ENCODE measurements at regions of chr6 and their contacts with region 1.

Region 1: GRCh38 chr6:153312641-153313040 is 181.6 kb upstream of the RGS17 start:
- DNase-seq: no peak
- H3K4me3 ChIP-seq: no peak overlapping the region
- H3K27ac ChIP-seq: no peak overlapping the region
- H3K4me1 ChIP-seq: no peaks in the 10 kb centered on the region
- H3K27me3 ChIP-seq: no peaks in the 10 kb centered on the region
- CTCF ChIP-seq: no peak
- POLR2A ChIP-seq: no peak

Region 2: DNA sequence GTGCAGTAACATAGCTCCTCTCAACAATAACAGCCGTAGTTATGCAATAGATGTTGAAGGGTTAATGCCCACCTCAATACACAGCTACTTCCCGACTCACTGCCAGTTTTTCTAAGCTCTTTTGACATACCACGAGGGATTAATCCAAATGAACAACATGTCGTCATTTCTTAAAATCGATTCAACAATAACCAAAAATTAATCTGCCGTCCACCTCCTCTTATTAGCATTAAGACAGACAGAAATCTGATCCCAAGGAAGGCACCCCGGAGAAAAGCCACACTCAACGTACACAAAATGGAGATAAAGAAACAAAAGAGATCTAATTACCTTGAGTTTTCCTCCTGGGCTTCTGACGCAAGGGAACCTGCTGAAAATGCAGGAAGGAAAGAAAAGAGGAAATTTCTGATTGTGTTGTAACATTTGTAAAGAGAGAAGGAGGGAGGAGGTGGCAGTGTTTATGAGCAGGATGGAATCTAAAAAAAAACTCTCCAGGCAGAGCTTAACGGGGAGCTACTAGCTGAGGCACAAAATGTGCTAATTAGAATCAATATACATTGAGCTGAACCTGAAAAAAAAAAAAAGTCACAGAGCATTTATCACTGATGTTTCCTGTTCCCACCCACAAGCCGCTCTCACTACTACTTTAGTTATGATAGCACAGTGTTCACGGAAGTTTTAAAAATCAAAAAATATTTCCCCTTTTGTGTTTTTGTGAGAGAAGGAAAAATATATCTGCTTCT is 934.6 kb after region 1 on chr6:
- intact Hi-C with region 1: loop called (anchors 10 kb)
- DNase-seq: no peak
- H3K4me3 ChIP-seq: peak overlapping the region; percentile 13 to 20 (median 17)
- H3K27ac ChIP-seq: no peak overlapping the region
- H3K4me1 ChIP-seq: no peaks in the 10 kb centered on the region
- H3K27me3 ChIP-seq: no peaks in the 10 kb centered on the region
- CTCF ChIP-seq: no peak
- POLR2A ChIP-seq: no peak